HEK293 (cell line): ENCODE measurements at regions of chr9 and their contacts with region 1.

Region 1: GRCh38 chr9:71911253-71912074 is at the start of gene C9orf85:
- H3K4me3 ChIP-seq: peak within 1 kb of the TSS; percentile 97
- H3K27ac ChIP-seq: peak within 1 kb of the TSS; percentile 90
- H3K4me1 ChIP-seq: no peaks in the 10 kb centered on the region; the same call in 1 of the 2 replicates
- CTCF ChIP-seq: no peak

Region 2: DNA sequence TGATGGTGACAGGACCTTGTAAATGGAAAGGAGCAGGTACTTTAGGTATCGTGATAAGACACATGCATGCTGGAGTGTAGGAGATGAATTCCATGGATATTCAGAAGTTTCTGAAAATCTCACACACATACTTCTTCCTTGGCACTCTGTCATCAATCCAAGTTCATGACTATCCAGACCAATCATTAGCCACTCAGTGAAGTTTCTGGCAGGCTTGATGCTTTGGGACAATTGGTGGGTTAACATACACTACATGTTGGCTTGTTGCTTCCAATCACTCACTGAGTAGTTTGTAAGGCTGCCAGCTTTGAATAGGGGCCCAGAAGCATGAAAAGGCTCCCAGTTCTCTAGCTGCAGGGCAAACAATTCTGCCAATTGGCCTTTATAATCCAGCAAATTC is 290.7 kb before region 1 on chr9:
- CTCF ChIA-PET with region 1: no interaction called
- POLR2A ChIA-PET with region 1: no interaction called
- H3K4me3 ChIP-seq: no peak overlapping the region
- H3K27ac ChIP-seq: no peak overlapping the region
- H3K4me1 ChIP-seq: no peaks in the 10 kb centered on the region
- CTCF ChIP-seq: no peak

Region 3: GRCh38 chr9:71929791-71930440 is 18.5 kb after region 1 on chr9:
- CTCF ChIA-PET with region 1: interaction called, 3 read pairs
- POLR2A ChIA-PET with region 1: interaction called, 18 read pairs
- H3K4me3 ChIP-seq: no peak overlapping the region
- H3K27ac ChIP-seq: no peak overlapping the region
- H3K4me1 ChIP-seq: no peaks in the 10 kb centered on the region
- CTCF ChIP-seq: no peak

Region 4: GRCh38 chr9:71984403-71984802 is 72.9 kb after region 1 on chr9:
- CTCF ChIA-PET with region 1: interaction called, 3 read pairs
- POLR2A ChIA-PET with region 1: interaction called, 12 read pairs
- H3K4me3 ChIP-seq: no peak overlapping the region
- H3K27ac ChIP-seq: no peak overlapping the region
- H3K4me1 ChIP-seq: peaks cover 17% of the 10 kb centered on the region
- CTCF ChIP-seq: no peak

Region 5: DNA sequence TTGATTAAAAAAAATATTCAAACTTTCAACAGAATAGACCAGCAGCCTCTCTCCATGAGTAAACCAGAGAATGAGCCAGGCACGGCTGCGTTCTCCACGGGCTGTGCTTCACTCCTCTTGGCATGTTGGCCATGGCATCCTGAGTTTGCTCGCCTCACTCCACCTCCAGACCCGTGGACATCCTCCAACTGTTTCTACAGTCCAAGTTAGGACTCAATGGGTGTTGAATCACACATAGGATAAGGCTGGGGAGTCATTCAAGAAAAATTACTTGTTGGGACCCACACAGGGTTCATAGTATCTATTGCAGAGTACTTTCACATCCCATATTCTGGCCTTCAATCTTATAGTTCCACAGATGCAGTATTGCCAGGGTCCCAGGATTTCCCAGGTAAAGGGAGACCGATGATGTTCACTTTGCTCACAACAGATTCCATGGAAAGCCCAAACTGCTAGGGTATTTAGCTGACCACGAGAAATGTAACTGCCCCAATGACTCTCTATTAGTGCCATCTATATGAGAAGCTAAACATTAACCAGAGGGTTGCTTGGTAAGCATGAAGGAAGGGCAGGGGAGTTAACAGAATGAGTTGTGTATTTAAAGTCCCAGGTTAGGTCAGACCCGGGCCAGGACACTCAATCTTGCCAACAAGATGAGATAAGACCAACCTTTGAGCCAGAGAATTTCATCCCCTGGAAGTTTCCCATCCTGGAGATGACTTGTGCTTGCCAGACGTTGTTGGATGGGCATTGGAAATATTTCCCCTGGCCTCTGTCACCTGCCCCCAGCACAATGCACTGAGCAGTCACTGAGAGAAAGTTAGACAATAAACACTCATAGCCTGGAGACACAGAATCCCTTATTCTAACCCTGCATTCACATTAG is 218.1 kb after region 1 on chr9:
- CTCF ChIA-PET with region 1: no interaction called
- POLR2A ChIA-PET with region 1: no interaction called
- H3K4me3 ChIP-seq: no peak overlapping the region
- H3K27ac ChIP-seq: no peak overlapping the region
- H3K4me1 ChIP-seq: no peaks in the 10 kb centered on the region
- CTCF ChIP-seq: no peak

Region 6: GRCh38 chr9:72154468-72155281 is 243.2 kb after region 1 on chr9:
- CTCF ChIA-PET with region 1: no interaction called
- POLR2A ChIA-PET with region 1: no interaction called
- H3K4me3 ChIP-seq: no peak overlapping the region
- H3K27ac ChIP-seq: no peak overlapping the region
- H3K4me1 ChIP-seq: no peaks in the 10 kb centered on the region
- CTCF ChIP-seq: no peak